Naive thymus-derived CD8-positive, alpha-beta T cell (primary cell): ENCODE measurements at regions of chr10 and their contacts with region 1.

Region 1: GRCh38 chr10:12605580-12606405 is 256.4 kb downstream of the CAMK1D start:
- DNase-seq: peak; percentile 21 to 79 (median 62)
- ATAC-seq: peak; percentile 85 to 87
- H3K4me3 Mint-ChIP-seq: peak overlapping the region; percentile 82 to 91 (median 86)
- H3K27ac Mint-ChIP-seq: peak overlapping the region; percentile 93 to 99 (median 98)
- H3K4me1 Mint-ChIP-seq: peaks cover 12 to 39% (median 32%) of the 10 kb centered on the region in 4 donors
- H3K27me3 Mint-ChIP-seq: no peaks in the 10 kb centered on the region

Region 2: DNA sequence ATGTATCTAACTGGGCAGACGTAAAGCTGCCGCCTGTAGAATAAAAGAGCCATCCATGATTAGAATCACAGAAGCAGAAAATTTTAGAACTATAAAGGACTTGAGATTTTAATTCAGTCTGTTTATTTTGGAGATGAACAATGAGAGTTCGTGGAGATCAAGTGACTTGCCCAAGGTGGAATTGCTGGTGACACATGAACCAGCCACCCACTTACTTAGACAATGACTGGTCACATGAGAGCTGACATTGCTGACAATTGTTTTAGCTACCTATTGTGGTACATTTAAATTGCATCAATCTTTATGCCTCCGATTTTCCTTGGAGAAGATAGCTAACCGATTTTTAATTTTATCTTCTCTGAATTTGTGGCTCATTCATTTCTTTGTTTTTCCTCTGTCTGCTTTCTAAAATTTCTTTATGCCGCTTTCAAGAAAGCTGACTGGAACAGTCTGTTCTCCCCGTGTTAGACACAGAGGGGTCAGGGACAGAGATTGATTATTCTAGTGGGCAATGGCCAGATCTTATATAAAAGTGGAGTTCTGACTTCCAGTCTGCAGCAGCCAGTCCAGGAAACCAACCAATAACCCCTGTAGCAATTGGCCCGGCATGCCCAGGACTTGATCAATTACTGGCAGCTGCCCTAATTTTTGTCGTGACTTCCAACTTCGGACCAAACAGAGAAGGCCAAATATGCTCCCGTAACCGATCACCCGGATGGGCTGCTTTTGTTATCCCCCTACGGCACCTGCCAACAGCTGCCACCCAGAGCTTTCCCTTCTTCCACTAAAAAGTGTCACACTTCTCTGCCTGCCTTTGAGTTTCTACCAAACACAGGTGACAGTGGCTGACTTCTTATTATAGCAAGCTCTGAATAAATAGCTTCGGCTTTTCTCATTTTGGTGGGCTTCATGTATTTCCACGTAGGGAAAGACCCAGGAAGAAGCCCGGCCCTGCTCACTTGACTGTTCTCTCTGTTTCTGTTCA is 14.8 kb before region 1 on chr10:
- POLR2A ChIA-PET with region 1: interaction called, 11 read pairs
- DNase-seq: no peak
- ATAC-seq: no peak
- H3K4me3 Mint-ChIP-seq: peak overlapping the region in 8 of 10 donors; percentile 12 to 65 (median 44)
- H3K27ac Mint-ChIP-seq: peak overlapping the region; percentile 19 to 85 (median 71)
- H3K4me1 Mint-ChIP-seq: peaks cover 48 to 85% (median 85%) of the 10 kb centered on the region in 4 donors
- H3K27me3 Mint-ChIP-seq: no peaks in the 10 kb centered on the region